ENCODE measurements at regions of chr7 and their contacts with region 1.

Region 1: DNA sequence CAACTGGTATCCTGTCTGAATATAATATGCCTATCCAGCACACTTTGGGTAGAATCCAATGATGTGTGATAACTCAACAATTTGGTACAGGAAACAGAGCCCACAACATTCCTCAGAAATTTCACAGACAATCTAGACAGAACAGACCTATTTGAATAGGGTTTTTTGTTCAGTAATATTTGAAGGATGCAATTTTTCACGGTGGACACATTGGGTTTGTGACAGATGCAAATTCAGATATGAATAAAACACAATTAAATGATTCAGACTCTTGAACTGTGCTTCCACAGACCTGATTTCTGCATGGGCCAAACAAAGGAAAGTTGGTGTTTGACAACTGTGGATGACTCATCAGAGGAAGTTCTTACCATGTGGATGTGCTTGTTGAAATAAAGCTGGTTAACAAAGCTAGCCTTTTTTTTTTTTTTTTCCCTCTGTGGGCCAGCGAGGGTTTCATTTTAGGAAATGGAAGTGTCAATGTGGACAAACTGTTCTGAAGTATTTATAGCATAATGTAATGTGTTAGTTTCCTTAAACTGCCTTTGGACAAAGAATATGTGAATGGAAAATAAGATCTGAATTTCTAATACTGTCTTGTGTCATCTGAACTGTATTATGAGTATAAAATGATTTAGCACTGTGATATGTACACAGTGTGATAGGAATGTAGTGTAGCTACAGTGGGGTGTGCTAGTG is 43.2 kb upstream of the FAM133B start:
- DNase-seq: peak; percentile 84 to 95 (median 92)
- H3K4me3 ChIP-seq: peak overlapping the region in 1 of 3 experiments; percentile 70
- H3K4me3 Mint-ChIP-seq: peak overlapping the region in 1 of 2 donors; percentile 63
- H3K27ac ChIP-seq: peak overlapping the region in 1 of 2 donors; percentile 94
- H3K27ac Mint-ChIP-seq: peak overlapping the region; percentile 81 to 97 (median 89)
- H3K4me1 ChIP-seq: peaks cover 43 to 60% of the 10 kb centered on the region in 2 donors
- H3K4me1 Mint-ChIP-seq: peaks cover 47% of the 10 kb centered on the region
- H3K27me3 ChIP-seq: no peaks in the 10 kb centered on the region
- H3K27me3 Mint-ChIP-seq: no peaks in the 10 kb centered on the region
- CTCF ChIP-seq: no peak

Region 2: DNA sequence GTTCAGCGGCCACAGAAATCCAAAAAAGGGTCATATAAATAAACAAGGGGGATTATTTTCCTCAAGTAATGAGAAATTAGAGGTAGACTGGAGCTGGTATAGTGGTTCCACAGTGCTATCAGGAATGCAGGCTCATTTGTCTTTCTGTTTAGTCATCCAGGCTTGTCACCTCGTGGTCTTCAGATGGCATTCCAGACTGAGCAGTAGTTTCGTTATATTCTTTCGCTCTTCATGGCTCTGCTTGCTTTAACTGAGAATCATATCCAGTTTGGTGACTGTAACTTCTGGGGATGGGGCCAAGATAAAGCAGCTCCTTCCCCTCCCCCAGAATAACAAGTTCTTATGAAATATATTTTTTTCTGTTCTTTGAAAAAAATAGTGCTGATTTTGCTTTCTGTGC is 378.1 kb before region 1 on chr7:
- intact Hi-C with region 1: no loop called
- DNase-seq: no peak
- H3K4me3 ChIP-seq: no peak overlapping the region
- H3K4me3 Mint-ChIP-seq: no peak overlapping the region
- H3K27ac ChIP-seq: no peak overlapping the region
- H3K27ac Mint-ChIP-seq: no peak overlapping the region
- H3K4me1 ChIP-seq: no peaks in the 10 kb centered on the region
- H3K4me1 Mint-ChIP-seq: peaks cover 9% of the 10 kb centered on the region
- H3K27me3 ChIP-seq: no peaks in the 10 kb centered on the region
- H3K27me3 Mint-ChIP-seq: peaks cover 0 to 3% (median 0%) of the 10 kb centered on the region in 3 donors
- CTCF ChIP-seq: no peak

Region 3: GRCh38 chr7:92731335-92732063 is 98.1 kb after region 1 on chr7:
- intact Hi-C with region 1: loop called in 1 of 2 experiments (anchors 5 kb)
- DNase-seq: peak; percentile 74 to 88 (median 88)
- H3K4me3 ChIP-seq: peak overlapping the region in 1 of 3 experiments; percentile 53
- H3K4me3 Mint-ChIP-seq: peak overlapping the region; percentile 12 to 39
- H3K27ac ChIP-seq: peak overlapping the region; percentile 69 to 83
- H3K27ac Mint-ChIP-seq: peak overlapping the region; percentile 81 to 95 (median 93)
- H3K4me1 ChIP-seq: peaks cover 28 to 29% of the 10 kb centered on the region in 2 donors
- H3K4me1 Mint-ChIP-seq: peaks cover 38% of the 10 kb centered on the region
- H3K27me3 ChIP-seq: no peaks in the 10 kb centered on the region
- H3K27me3 Mint-ChIP-seq: no peaks in the 10 kb centered on the region
- CTCF ChIP-seq: no peak

Region 4: GRCh38 chr7:92797693-92798092 is 164.3 kb after region 1 on chr7:
- intact Hi-C with region 1: no loop called
- DNase-seq: no peak
- H3K4me3 ChIP-seq: no peak overlapping the region
- H3K4me3 Mint-ChIP-seq: no peak overlapping the region
- H3K27ac ChIP-seq: no peak overlapping the region
- H3K27ac Mint-ChIP-seq: no peak overlapping the region
- H3K4me1 ChIP-seq: peaks cover 3 to 14% of the 10 kb centered on the region in 2 donors
- H3K4me1 Mint-ChIP-seq: peaks cover 20% of the 10 kb centered on the region
- H3K27me3 ChIP-seq: no peaks in the 10 kb centered on the region
- H3K27me3 Mint-ChIP-seq: no peaks in the 10 kb centered on the region
- CTCF ChIP-seq: no peak

Measured in CD14-positive monocyte (primary cell).